MCF 10A (cell line): ENCODE measurements at regions of chr2 and their contacts with region 1.

Region 1: DNA sequence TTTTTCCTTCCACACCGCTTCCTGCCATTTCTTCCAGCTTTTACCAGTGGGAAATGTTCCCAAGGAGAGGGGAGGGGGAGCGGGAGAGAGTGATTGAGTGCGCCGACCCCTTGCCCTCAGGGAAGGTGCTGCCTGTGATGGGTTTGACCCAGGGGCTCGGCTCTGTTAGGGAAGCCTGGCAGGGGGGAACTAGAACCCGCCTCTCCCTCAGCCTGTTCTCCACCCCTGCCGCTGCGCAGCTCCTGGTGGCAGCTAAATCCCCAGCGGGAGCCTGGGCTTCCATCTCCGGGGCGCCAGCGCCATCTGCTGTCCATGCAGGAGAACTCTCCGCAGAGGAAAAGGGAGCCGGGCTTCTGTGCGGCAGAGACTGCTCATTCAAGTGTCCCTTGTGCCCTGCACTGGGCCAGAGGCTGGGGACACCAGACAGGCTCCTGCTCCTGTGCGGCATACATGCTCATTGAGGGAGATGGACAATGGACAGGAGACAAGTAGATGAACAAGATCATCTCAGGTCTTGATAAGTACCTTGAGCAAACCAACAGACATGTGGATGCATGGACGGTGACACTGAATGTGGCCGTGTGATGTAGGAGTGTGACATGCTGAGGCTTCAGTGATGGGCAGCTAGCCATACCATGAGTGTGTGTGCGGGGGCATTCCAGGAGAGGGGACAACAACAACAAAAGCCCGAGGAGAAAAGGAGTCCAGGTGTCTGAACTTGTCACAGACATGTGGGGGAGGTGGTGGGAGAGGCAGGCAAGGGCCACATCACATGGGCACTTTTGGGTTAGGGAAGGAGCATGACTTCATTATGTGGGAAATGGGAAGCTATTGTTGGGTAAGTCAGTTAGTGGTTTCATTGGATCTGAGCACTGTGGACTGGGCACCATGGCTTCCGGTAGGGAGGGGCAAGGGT is 13.3 kb downstream of the CHPF start:
- DNase-seq: peak; percentile 76
- H3K4me3 Mint-ChIP-seq: no peak overlapping the region
- H3K27ac Mint-ChIP-seq: no peak overlapping the region
- H3K4me1 Mint-ChIP-seq: no peaks in the 10 kb centered on the region
- H3K27me3 Mint-ChIP-seq: peaks cover 64% of the 10 kb centered on the region
- CTCF ChIP-seq: peak; percentile 97

Region 2: GRCh38 chr2:218694405-218695145 is 835.7 kb before region 1 on chr2:
- CTCF ChIA-PET with region 1: no interaction called
- POLR2A ChIA-PET with region 1: no interaction called
- intact Hi-C with region 1: no loop called
- DNase-seq: no peak
- H3K4me3 Mint-ChIP-seq: no peak overlapping the region
- H3K27ac Mint-ChIP-seq: no peak overlapping the region
- H3K4me1 Mint-ChIP-seq: no peaks in the 10 kb centered on the region
- H3K27me3 Mint-ChIP-seq: no peaks in the 10 kb centered on the region
- CTCF ChIP-seq: no peak

Region 3: GRCh38 chr2:219402665-219403515 is 127.4 kb before region 1 on chr2:
- CTCF ChIA-PET with region 1: interaction called, 287 read pairs
- POLR2A ChIA-PET with region 1: interaction called, 14 read pairs
- intact Hi-C with region 1: loop called (anchors 1 kb)
- DNase-seq: peak; percentile 85
- H3K4me3 Mint-ChIP-seq: no peak overlapping the region
- H3K27ac Mint-ChIP-seq: no peak overlapping the region
- H3K4me1 Mint-ChIP-seq: peaks cover 6% of the 10 kb centered on the region
- H3K27me3 Mint-ChIP-seq: no peaks in the 10 kb centered on the region
- CTCF ChIP-seq: peak; percentile 86

Region 4: DNA sequence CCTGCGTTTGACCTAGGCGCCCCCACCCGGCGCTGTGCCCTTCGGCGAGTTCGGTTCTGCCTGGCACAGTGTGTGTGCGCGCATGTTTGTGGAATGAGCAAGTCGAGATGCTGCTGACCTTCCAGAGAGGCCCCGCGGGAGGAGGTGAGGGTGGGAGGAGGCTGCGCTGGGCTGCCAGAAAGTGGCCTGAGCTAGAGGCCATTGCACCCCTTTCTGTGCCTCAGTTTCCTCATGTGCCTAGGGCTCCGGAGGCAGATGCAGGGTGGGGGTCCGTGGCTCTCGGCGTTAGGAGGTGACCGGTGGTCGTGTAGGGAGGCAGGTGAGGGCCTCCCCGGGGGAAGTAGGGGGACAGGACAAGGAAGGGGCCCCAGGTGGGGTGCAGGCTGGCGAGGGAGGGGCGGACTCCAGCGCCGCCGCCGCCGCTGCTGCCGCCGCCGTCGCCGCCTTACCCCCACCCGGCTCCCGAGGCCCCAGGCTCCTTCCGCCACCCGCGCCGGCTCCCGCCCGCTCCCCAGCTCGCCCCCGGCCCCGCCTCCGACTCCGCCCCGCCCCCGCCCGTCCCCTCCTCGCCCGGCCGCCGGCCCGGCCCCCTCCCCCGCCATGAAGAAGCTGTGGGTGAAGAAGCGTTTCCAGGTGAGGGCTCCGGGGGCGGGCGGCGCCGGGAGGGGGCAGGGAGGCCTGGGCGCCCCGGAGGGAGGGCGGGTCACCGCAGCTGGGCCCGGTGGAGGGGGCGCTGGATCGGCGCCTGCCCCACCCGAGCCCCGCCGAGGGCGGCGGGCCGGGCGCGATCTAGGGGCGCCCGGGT is 88.7 kb before region 1 on chr2:
- CTCF ChIA-PET with region 1: interaction called, 12 read pairs
- POLR2A ChIA-PET with region 1: no interaction called
- intact Hi-C with region 1: no loop called
- DNase-seq: peak; percentile 48
- H3K4me3 Mint-ChIP-seq: peak overlapping the region; percentile 83
- H3K27ac Mint-ChIP-seq: no peak overlapping the region
- H3K4me1 Mint-ChIP-seq: peaks cover 35% of the 10 kb centered on the region
- H3K27me3 Mint-ChIP-seq: no peaks in the 10 kb centered on the region
- CTCF ChIP-seq: no peak

Region 5: DNA sequence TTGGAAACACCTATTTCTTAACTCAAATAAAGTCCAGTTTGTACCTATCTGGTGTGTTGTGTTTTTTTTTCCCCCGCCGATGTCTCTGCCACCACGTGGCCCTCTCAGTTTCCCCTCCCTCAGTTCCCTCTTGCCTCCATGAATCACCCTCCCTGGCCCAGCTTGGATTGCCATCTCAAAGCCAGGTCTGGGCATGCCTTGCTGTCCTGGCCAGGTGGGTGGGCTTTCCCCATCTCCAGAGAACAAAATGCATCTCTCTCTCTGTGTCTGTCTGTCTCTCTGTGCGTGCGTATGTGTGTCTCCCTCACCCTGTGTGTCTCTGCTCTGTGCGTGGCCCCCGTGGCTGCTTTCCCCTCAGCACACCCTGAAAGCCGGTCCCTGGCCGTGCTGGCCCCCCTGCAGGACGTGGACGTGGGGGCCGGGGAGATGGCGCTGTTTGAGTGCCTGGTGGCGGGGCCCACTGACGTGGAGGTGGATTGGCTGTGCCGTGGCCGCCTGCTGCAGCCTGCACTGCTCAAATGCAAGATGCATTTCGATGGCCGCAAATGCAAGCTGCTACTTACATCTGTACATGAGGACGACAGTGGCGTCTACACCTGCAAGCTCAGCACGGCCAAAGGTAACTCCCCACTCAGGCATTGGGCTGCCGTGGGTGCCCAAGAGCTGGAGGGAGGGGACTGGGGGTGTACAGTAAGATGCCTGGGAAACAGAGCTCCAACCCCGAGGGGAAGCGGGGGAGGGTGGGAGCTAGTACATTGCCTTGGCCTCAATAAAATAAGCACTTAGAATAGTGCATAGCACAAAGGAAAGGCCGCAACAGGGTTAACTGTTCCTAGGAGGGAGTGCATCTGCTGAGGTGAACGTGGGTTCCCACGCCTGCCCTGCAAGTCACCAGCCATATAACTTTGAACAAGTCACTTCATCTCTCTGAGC is 63.2 kb before region 1 on chr2:
- CTCF ChIA-PET with region 1: interaction called, 17 read pairs
- POLR2A ChIA-PET with region 1: no interaction called
- intact Hi-C with region 1: no loop called
- DNase-seq: peak; percentile 32
- H3K4me3 Mint-ChIP-seq: no peak overlapping the region
- H3K27ac Mint-ChIP-seq: no peak overlapping the region
- H3K4me1 Mint-ChIP-seq: no peaks in the 10 kb centered on the region
- H3K27me3 Mint-ChIP-seq: no peaks in the 10 kb centered on the region
- CTCF ChIP-seq: no peak

Region 6: DNA sequence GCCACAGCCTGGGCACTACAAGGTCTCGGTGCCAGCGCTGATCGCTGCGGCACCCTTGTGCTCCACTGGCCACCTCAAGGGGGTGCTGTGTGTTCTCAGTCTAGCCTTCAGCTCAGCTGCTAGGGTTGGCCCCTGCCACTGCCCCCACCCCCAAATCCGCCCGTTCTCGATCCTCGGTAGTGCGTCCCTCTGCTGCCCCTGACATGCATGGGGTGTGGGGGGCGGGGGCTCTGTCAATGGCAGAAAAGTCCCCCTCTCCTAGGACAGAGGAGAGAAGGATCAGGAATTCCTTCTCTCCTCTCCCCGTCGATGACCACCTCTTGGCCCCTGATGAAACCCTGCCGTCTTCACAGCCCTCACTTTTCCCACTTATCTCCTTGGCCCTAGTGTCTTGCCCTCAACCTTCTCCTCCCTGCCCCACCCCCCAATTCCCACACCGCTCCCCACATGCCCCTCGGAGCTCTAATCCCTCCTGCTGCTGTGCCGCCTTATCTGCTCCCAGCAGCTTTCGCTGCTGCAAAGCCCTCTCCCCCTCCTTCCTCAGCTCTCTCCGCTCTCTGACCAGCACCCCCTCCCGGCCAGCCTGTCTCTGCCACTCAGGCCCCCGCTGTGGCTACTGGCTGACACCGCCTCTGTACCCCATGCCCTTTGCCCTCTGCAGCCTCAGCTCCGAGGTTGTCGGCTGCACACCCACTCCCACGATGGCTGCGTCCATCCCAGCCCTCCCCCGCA is 20.4 kb before region 1 on chr2:
- CTCF ChIA-PET with region 1: interaction called, 34 read pairs
- POLR2A ChIA-PET with region 1: no interaction called
- intact Hi-C with region 1: loop called (anchors 1 kb)
- DNase-seq: peak; percentile 60
- H3K4me3 Mint-ChIP-seq: peak overlapping the region; percentile 38
- H3K27ac Mint-ChIP-seq: no peak overlapping the region
- H3K4me1 Mint-ChIP-seq: peaks cover 11% of the 10 kb centered on the region
- H3K27me3 Mint-ChIP-seq: peaks cover 53% of the 10 kb centered on the region
- CTCF ChIP-seq: peak; percentile 61

Region 7: GRCh38 chr2:219961947-219962498 is 431.7 kb after region 1 on chr2:
- CTCF ChIA-PET with region 1: no interaction called
- POLR2A ChIA-PET with region 1: no interaction called
- intact Hi-C with region 1: no loop called
- DNase-seq: no peak
- H3K4me3 Mint-ChIP-seq: no peak overlapping the region
- H3K27ac Mint-ChIP-seq: no peak overlapping the region
- H3K4me1 Mint-ChIP-seq: no peaks in the 10 kb centered on the region
- H3K27me3 Mint-ChIP-seq: no peaks in the 10 kb centered on the region
- CTCF ChIP-seq: no peak